ENCODE measurements at regions of chr11 and their contacts with region 1.

Region 1: GRCh38 chr11:94885133-94885532 is 88.2 kb downstream of the CWC15 start:
- DNase-seq: no peak
- ATAC-seq: no peak

Region 2: GRCh38 chr11:94623120-94623735 is 261.9 kb before region 1 on chr11:
- intact Hi-C with region 1: loop called (anchors 10 kb)
- DNase-seq: peak; percentile 63
- ATAC-seq: peak; percentile 95

Region 3: DNA sequence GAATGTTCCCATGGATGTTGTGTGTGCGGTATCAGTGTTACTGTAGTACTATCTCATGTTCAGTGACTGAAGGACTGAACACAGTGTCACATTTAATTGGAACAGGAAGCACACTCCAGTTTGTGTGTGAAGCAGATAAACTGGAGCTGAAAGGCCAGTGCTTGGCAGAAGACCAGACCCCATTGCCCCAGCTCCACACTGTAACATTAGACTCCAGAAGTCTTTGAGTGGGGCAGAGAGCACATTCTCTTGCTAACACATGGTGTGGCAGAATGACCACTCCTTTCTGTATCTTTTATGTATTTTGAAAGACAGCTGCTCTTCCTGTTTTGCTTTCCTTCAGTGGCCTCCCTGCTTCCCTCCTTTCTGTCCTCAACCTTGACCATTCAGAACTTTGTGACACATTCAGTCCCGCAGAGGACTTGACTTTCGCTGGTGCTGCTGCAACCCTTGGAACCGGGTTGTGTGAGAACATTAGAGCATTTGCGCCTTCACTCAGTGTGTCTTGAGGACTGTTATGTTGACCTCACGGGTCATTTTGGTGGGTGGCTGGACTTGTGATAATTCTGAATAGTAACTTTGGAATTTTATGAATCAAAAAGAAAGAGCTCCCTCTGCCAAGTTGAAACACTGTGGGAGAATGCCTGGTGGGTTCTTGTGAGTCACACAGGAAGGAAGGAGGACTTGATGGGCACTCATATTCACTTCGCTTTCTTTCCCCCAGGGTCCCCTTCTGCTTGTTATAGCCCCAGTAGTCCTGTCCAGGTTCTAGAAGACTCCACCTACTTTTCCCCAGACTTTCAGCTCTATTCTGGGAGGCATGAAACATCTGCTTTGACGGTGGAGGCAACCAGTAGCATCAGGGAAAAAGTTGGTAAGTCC is 90.6 kb before region 1 on chr11:
- intact Hi-C with region 1: no loop called
- DNase-seq: peak; percentile 68
- ATAC-seq: peak; percentile 83